Activated CD8-positive, alpha-beta memory T cell treated with anti-CD3 and anti-CD28 coated beads, Interleukin-2, amount 10 ng/mL, durations not matched to agents 7 days and 5 days (primary cell): ENCODE measurements at regions of chr5 and their contacts with region 1.

Region 1: DNA sequence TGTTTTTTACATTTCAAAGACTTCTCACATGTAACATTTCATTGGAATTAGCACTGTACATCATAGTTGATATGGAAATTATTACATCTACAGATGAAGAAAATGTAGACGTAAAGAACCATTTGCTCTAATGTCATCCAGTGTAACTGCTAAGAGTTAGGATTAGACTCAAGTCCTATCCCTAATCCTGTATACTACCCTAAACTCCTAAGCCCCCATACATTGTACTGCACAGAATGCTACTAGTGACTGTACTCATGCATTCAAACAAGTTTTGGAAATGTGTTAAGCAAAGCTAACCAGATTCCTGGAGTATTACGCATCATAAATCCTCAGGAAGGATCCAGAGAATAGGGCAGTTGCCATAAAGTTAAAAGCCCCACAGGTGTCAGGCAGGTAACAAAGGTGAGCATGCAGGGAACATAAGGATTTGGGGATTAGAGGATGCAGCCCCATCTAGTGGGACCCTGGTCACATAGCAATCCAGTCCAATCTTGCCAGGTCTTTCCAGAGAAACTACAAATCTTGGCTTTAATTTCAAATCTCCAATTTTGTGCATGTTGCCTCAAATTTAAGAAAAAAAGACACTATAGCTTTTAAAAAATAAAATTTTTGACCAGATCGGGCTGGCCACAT is 32.0 kb downstream of the HAVCR1 start:
- DNase-seq: no peak
- ATAC-seq: no peak
- H3K4me3 Mint-ChIP-seq: no peak overlapping the region
- H3K27ac Mint-ChIP-seq: peak overlapping the region; percentile 90
- H3K4me1 Mint-ChIP-seq: peaks cover 80% of the 10 kb centered on the region
- H3K27me3 Mint-ChIP-seq: no peaks in the 10 kb centered on the region

Region 2: GRCh38 chr5:156920042-156920860 is 106.7 kb before region 1 on chr5:
- CTCF ChIA-PET with region 1: interaction called, 12 read pairs
- DNase-seq: peak; percentile 80
- ATAC-seq: peak; percentile 68
- H3K4me3 Mint-ChIP-seq: peak overlapping the region; percentile 73
- H3K27ac Mint-ChIP-seq: peak overlapping the region; percentile 91
- H3K4me1 Mint-ChIP-seq: peaks cover 55% of the 10 kb centered on the region
- H3K27me3 Mint-ChIP-seq: no peaks in the 10 kb centered on the region